Mammary epithelial cell (primary cell): ENCODE measurements at regions of chr1 and their contacts with region 1.

Region 1: DNA sequence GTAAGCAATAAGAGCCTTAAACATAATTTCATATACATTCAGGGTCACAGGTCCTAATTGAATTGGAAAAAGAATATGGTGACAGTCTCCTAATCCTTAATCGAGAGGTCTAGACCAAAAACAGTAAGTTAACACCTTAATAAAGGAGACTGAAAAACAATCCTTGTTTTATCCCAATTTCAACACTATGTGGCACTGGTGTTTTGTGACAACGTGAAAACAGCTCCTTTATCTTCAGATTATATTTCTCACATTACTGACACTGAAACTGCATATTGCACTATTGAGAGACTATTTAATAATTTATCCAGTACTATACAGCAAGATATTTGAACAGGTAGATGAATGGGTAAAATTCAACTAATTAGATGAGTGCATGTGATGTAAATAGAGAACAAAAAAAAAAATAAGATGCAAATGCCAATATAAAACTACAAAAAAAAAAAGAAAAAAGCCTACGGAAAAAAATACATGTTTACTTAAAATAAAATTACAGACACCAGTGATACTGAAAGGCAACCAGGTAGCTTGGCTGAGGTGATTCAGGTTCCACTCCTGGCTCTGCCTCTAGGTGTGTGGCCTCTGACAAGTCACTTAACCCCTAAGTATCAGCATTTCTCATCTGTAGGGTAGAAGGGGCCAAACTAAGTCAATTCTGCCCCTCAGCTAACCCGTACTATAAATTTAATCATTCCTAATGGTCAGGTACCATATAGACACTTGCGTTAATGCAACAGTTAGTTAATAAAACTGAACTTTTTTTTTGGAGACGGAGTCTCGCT is 33.9 kb downstream of the TP53BP2 start:
- DNase-seq: peak; percentile 27
- H3K4me3 ChIP-seq: no peak overlapping the region
- H3K27ac ChIP-seq: no peak overlapping the region
- H3K4me1 ChIP-seq: peaks cover 25% of the 10 kb centered on the region
- H3K27me3 ChIP-seq: no peaks in the 10 kb centered on the region
- CTCF ChIP-seq: peak; percentile 41 to 55

Region 2: GRCh38 chr1:223845810-223846682 is 34.2 kb after region 1 on chr1 and contains the start of gene TP53BP2:
- CTCF ChIA-PET with region 1: no interaction called
- dilution Hi-C with region 1: no loop called
- in situ Hi-C with region 1: no loop called
- intact Hi-C with region 1: loop called (anchors 1 kb)
- DNase-seq: peak; percentile 86
- H3K4me3 ChIP-seq: peak within 1 kb of the TSS; percentile 82 to 98 (median 90)
- H3K27ac ChIP-seq: peak within 1 kb of the TSS; percentile 94
- H3K4me1 ChIP-seq: peaks cover 15% of the 10 kb centered on the region
- H3K27me3 ChIP-seq: no peaks in the 10 kb centered on the region
- CTCF ChIP-seq: peak; percentile 35 to 76
- total RNA-seq, gene TP53BP2: 13.7 to 19.4 TPM

Region 3: GRCh38 chr1:224106568-224107281 is 294.9 kb after region 1 on chr1:
- CTCF ChIA-PET with region 1: no interaction called
- dilution Hi-C with region 1: no loop called
- in situ Hi-C with region 1: no loop called
- intact Hi-C with region 1: loop called (anchors 1 kb)
- DNase-seq: peak; percentile 52
- H3K4me3 ChIP-seq: no peak overlapping the region
- H3K27ac ChIP-seq: no peak overlapping the region
- H3K4me1 ChIP-seq: peaks cover 4% of the 10 kb centered on the region
- H3K27me3 ChIP-seq: no peaks in the 10 kb centered on the region
- CTCF ChIP-seq: peak; percentile 55 to 74

Region 4: GRCh38 chr1:224329842-224330753 is 518.3 kb after region 1 on chr1 and contains the start of gene NVL:
- CTCF ChIA-PET with region 1: no interaction called
- dilution Hi-C with region 1: no loop called
- in situ Hi-C with region 1: loop called in 1 of 2 experiments (anchors 25 kb)
- intact Hi-C with region 1: no loop called
- DNase-seq: peak; percentile 89
- H3K4me3 ChIP-seq: peak within 1 kb of the TSS; percentile 64 to 98 (median 87)
- H3K27ac ChIP-seq: peak within 1 kb of the TSS; percentile 95
- H3K4me1 ChIP-seq: peaks cover 14% of the 10 kb centered on the region
- H3K27me3 ChIP-seq: no peaks in the 10 kb centered on the region
- CTCF ChIP-seq: no peak
- total RNA-seq, gene NVL: 24.3 to 28.8 TPM